Activated CD4-positive, alpha-beta T cell treated with anti-CD3 and anti-CD28 coated beads for 36 hours (primary cell): ENCODE measurements at regions of chr21 and their contacts with region 1.

Region 1: DNA sequence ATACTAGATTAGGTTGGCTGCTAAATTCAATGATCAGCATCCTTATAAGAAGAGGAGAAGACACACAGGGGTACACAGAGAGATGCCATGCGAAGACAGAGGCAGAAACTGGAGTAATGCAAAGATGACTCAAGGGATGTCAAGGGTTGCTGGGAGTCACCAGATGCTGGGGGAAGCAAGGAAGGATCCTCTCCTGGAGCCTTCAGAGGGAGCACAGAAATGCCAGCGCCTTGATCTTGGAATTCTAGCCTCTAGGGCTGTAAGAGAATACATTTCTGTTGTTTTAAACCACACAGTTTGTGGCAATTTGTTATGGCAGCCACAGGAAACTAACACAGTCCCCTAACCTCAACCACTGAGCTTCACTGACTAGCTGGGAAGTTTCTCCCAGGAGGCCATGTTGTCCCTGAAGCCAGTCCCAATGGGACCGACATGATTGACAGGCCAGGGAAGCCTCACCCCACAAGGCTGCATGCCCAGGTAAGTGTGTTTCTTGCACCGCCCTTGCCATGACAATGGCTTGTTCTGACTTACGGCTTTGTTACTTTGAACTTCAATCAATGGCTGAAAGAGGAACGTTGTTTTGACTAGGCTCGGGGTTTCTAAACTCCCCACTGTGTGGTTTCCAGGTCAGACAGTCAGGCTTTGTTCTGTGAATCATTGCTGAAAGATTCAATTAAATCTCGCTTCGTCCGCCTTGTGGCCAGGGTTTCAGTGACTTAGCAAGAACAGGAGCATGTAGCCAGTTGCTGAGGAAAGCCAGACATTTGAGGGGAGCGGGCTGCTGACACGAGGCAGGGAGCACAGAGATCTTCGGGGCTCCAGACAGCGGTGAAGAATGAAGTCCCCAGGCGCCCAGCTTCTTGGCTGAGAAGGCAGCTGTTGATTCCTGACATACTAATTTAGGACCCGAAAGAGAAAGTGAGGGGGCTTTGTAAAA is 62.3 kb downstream of the RUNX1 start:
- DNase-seq: peak; percentile 90
- ATAC-seq: peak; percentile 54
- H3K4me3 Mint-ChIP-seq: peak overlapping the region; percentile 61
- H3K27ac Mint-ChIP-seq: peak overlapping the region; percentile 89
- H3K4me1 Mint-ChIP-seq: peaks cover 97% of the 10 kb centered on the region
- H3K27me3 Mint-ChIP-seq: no peaks in the 10 kb centered on the region

Region 2: DNA sequence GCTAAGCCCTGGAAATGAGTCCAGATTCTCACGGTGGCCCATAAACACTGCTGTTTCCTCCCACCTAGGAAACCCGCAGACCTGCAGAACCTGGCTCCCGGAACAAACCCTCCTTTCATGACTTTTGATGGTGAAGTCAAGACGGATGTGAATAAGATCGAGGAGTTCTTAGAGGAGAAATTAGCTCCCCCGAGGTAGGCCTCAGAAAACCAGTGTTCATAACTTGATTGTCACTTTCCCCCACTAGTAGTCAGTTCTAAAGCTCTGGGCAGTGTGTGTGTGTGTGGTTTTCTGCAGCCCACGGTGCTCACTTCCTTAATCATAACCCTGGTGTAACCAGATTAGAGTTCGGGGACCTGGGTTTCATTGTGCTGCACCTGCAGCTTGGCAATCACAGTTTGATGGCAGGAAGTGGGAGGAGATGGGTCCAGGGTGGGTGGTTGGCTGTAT is 278.9 kb before region 1 on chr21:
- CTCF ChIA-PET with region 1: no interaction called
- POLR2A ChIA-PET with region 1: no interaction called
- intact Hi-C with region 1: loop called in 1 of 2 experiments (anchors 5 kb)
- DNase-seq: peak; percentile 83
- ATAC-seq: peak; percentile 94
- H3K4me3 Mint-ChIP-seq: no peak overlapping the region
- H3K27ac Mint-ChIP-seq: peak overlapping the region; percentile 49
- H3K4me1 Mint-ChIP-seq: peaks cover 26% of the 10 kb centered on the region
- H3K27me3 Mint-ChIP-seq: peaks cover 16% of the 10 kb centered on the region

Region 3: GRCh38 chr21:34946916-34947534 is 39.8 kb before region 1 on chr21:
- CTCF ChIA-PET with region 1: interaction called, 12 read pairs
- POLR2A ChIA-PET with region 1: interaction called, 17 read pairs
- intact Hi-C with region 1: loop called (anchors 1 kb)
- DNase-seq: no peak
- ATAC-seq: peak; percentile 65
- H3K4me3 Mint-ChIP-seq: peak overlapping the region; percentile 13
- H3K27ac Mint-ChIP-seq: peak overlapping the region; percentile 95
- H3K4me1 Mint-ChIP-seq: peaks cover 92% of the 10 kb centered on the region
- H3K27me3 Mint-ChIP-seq: no peaks in the 10 kb centered on the region

Region 4: DNA sequence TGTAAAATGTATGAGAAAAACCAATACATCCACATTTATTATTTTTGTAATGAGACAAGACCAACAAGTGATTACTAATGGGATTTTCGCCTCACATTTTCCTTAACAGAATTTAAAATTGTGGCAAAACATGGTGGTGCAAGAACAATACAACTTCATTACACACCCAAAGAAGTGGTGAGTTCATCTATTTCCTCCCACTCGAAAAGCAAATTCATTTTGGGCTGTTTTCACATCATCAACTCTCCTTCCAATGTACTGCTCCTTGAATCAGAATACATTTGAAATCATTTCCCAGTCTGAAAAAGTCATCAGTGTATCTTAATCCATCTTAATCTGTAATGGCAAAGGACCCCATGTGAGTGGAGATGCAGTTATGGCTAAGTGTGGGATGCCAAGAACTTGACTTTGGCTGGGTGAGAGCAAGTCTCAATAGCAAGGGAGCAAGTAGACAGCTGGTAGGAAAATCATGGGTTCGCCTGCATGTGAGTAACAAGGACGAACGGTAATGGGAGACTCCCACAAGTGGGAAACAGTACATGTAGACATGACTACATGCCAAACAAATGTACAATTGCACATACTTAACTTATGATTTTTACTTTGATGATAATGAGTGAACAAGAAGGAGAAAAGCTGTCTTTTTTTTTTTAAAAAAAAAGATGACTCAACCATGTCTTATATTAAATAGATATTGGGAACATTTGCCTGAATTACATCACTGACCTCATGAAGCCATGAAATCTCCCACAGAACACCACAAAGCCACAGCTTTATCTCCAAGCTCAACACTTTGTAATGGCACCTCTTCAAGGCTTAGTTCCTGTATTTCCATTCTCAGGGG is 16.3 kb after region 1 on chr21:
- CTCF ChIA-PET with region 1: interaction called, 11 read pairs
- POLR2A ChIA-PET with region 1: interaction called, 8 read pairs
- intact Hi-C with region 1: loop called (anchors 1 to 2 kb)
- DNase-seq: no peak
- ATAC-seq: peak; percentile 33
- H3K4me3 Mint-ChIP-seq: no peak overlapping the region
- H3K27ac Mint-ChIP-seq: peak overlapping the region; percentile 78
- H3K4me1 Mint-ChIP-seq: peaks cover 94% of the 10 kb centered on the region
- H3K27me3 Mint-ChIP-seq: no peaks in the 10 kb centered on the region

Region 5: GRCh38 chr21:35045542-35046262 is 58.9 kb after region 1 on chr21:
- CTCF ChIA-PET with region 1: interaction called, 10 read pairs
- POLR2A ChIA-PET with region 1: interaction called, 35 read pairs
- intact Hi-C with region 1: loop called (anchors 1 kb)
- DNase-seq: peak; percentile 64
- ATAC-seq: no peak
- H3K4me3 Mint-ChIP-seq: peak overlapping the region; percentile 87
- H3K27ac Mint-ChIP-seq: peak overlapping the region; percentile 95
- H3K4me1 Mint-ChIP-seq: peaks cover 79% of the 10 kb centered on the region
- H3K27me3 Mint-ChIP-seq: no peaks in the 10 kb centered on the region

Region 6: GRCh38 chr21:35113064-35113463 is 126.2 kb after region 1 on chr21:
- CTCF ChIA-PET with region 1: no interaction called
- POLR2A ChIA-PET with region 1: no interaction called
- intact Hi-C with region 1: no loop called
- DNase-seq: peak; percentile 38
- ATAC-seq: peak; percentile 88
- H3K4me3 Mint-ChIP-seq: no peak overlapping the region
- H3K27ac Mint-ChIP-seq: peak overlapping the region; percentile 34
- H3K4me1 Mint-ChIP-seq: peaks cover 15% of the 10 kb centered on the region
- H3K27me3 Mint-ChIP-seq: no peaks in the 10 kb centered on the region

Region 7: GRCh38 chr21:35138665-35139381 is 152.0 kb after region 1 on chr21:
- CTCF ChIA-PET with region 1: no interaction called
- POLR2A ChIA-PET with region 1: no interaction called
- intact Hi-C with region 1: loop called in 1 of 2 experiments (anchors 1 kb)
- DNase-seq: peak; percentile 83
- ATAC-seq: peak; percentile 91
- H3K4me3 Mint-ChIP-seq: peak overlapping the region; percentile 65
- H3K27ac Mint-ChIP-seq: peak overlapping the region; percentile 93
- H3K4me1 Mint-ChIP-seq: peaks cover 38% of the 10 kb centered on the region
- H3K27me3 Mint-ChIP-seq: no peaks in the 10 kb centered on the region

Region 8: DNA sequence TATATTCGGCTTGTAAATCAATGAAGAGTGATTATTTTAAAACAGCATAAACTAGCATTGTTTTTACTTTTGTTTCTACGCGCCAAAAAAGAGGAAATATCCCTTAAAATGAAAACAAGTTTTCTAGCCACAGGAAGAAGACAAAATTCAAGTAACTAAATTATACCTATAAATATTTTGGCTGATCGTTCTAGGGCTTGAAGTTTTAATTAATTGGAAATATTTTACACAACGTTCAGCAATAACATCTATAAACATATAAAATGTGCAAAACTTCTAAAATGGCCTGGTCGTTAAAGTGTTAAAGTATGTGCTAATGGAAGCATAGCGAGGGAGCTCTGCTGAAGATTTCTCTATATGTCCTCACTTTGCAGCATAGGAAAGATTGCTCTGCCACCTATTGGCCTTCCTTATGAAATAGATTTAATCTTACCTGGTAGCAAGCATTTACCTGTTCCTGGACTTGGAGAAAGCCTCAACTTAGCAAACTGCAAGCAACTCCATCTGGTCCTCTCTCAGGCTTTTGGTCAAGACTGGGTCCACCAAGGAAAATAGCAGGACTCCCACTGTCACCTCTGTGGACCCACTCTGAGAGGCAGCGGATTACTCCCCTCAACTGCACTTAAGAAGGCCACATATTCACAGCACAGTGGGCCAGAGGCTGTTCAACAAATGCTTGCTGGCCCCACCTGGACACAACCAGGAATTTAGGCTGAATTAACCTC is 413.6 kb after region 1 on chr21:
- CTCF ChIA-PET with region 1: interaction called, 6 read pairs
- POLR2A ChIA-PET with region 1: no interaction called
- intact Hi-C with region 1: loop called (anchors 5 kb)
- DNase-seq: peak; percentile 42
- ATAC-seq: peak; percentile 89
- H3K4me3 Mint-ChIP-seq: peak overlapping the region; percentile 33
- H3K27ac Mint-ChIP-seq: peak overlapping the region; percentile 82
- H3K4me1 Mint-ChIP-seq: peaks cover 28% of the 10 kb centered on the region
- H3K27me3 Mint-ChIP-seq: peaks cover 2% of the 10 kb centered on the region